ENCODE measurements at regions of chr14 and their contacts with region 1.

Region 1: GRCh38 chr14:78933948-78934524 is 763.9 kb downstream of the NRXN3 start:
- DNase-seq: peak; percentile 43
- H3K4me3 ChIP-seq: no peak overlapping the region
- H3K27ac ChIP-seq: no peak overlapping the region
- H3K4me1 ChIP-seq: no peaks in the 10 kb centered on the region
- H3K27me3 ChIP-seq: no peaks in the 10 kb centered on the region
- CTCF ChIP-seq: peak; percentile 77
- EP300 ChIP-seq: no peak
- RAD21 ChIP-seq: peak; percentile 78

Region 2: DNA sequence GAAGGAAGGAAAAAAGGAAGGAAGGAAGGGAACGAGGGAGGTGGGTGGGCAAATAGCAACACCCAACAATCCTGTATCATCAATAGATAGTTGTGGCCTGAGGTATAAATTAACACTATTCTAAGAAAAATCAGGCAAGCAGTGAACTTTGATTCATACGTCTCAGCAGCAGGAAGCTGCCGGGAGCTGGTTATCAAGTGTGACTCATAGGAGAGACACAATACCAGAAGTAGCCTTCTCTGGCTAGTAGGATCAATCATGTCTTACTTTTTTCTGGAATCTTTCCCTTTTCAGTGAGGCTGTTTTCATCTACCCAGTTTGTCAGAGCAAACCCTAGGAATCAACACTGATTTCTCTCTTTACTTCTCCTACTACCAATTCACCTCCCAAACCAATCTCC is 16.6 kb after region 1 on chr14:
- CTCF ChIA-PET with region 1: interaction called, 15 read pairs
- POLR2A ChIA-PET with region 1: no interaction called
- DNase-seq: no peak
- H3K4me3 ChIP-seq: no peak overlapping the region
- H3K27ac ChIP-seq: peak overlapping the region in 1 of 2 experiments; percentile 9; a peak in 1 of 4 replicates
- H3K4me1 ChIP-seq: no peaks in the 10 kb centered on the region
- H3K27me3 ChIP-seq: no peaks in the 10 kb centered on the region
- CTCF ChIP-seq: no peak
- EP300 ChIP-seq: 0 out of 4 replicates have a peak, but pooled peaks of 1 of the 2 experiments have one; percentile 26
- RAD21 ChIP-seq: no peak

Measured in SK-N-SH (cell line).